GM12878 (cell line): ENCODE measurements at regions of chr7 and their contacts with region 1.

Region 1: GRCh38 chr7:8134089-8134733 is 127.8 kb downstream of the ICA1 start:
- DNase-seq: peak; percentile 99
- ATAC-seq: peak; percentile 73
- H3K4me3 ChIP-seq: no peak overlapping the region
- H3K27ac ChIP-seq: peak overlapping the region; percentile 94
- H3K4me1 ChIP-seq: peaks cover 54% of the 10 kb centered on the region
- H3K27me3 ChIP-seq: no peaks in the 10 kb centered on the region
- CTCF ChIP-seq: no peak
- EP300 ChIP-seq: peak; percentile 81 to 92
- POLR2A ChIP-seq: no peak
- RAD21 ChIP-seq: peak; percentile 39; the same call in 1 of the 2 replicates

Region 2: DNA sequence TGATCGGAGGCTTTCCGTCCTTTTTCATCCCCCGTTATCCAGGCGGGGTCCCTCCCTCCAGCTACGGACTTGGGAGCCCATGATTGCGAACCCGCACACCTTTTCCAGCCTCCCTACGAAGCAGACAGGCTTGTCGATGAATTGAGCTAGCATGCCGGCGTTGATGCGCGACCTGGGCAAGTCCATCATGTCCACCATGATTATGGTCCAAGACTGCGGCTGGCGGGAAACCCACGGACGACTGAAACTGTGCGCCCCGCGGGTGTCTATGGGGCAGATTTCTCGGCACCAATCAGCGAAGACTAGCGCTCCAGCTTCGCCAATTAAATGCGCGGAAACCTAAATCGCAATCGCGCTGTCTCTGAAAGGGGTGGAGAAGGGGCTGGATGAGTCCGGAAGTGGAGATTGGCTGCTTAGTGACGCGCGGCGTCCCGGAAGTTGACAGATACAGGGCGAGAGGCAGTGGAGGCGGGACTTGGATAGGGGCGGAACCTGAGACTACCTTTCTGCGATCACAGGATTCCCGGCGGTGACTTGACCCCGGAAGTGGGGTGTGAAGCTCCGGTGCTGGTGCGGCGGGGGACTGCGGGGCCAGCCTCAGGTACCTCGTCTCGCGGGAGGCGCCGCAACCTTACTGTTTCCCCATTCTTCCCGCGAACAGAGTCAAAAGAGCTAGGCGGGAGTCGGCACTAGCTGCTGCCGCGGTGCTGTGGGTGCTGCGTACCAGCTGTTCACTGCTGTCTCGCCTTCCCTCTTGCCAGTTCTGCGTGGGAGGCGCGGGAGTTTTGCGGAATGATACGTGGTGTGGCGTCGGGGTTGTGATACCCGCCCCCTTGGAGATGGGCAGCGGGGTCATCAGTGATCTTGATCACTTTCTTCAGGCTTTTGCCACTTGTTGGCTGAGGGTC is 493.7 kb before region 1 on chr7 and contains the start of gene UMAD1:
- CTCF ChIA-PET with region 1: no interaction called
- POLR2A ChIA-PET with region 1: no interaction called
- RAD21 ChIA-PET with region 1: no interaction called
- SMC1A ChIA-PET with region 1: interaction called, 5 read pairs
- in situ Hi-C with region 1: no loop called
- intact Hi-C with region 1: loop called (anchors 5 kb)
- DNase-seq: peak; percentile 99
- ATAC-seq: peak; percentile 95
- H3K4me3 ChIP-seq: peak within 1 kb of the TSS; percentile 93
- H3K27ac ChIP-seq: peak within 1 kb of the TSS; percentile 79
- H3K4me1 ChIP-seq: no peaks in the 10 kb centered on the region
- H3K27me3 ChIP-seq: no peaks in the 10 kb centered on the region
- CTCF ChIP-seq: no peak
- EP300 ChIP-seq: 0 out of 4 replicates have a peak, but pooled peaks of 1 of the 2 experiments have one; percentile 15
- POLR2A ChIP-seq: peak; percentile 95
- RAD21 ChIP-seq: no peak
- polyA plus RNA-seq, gene UMAD1: 8.7 to 8.8 TPM

Region 3: DNA sequence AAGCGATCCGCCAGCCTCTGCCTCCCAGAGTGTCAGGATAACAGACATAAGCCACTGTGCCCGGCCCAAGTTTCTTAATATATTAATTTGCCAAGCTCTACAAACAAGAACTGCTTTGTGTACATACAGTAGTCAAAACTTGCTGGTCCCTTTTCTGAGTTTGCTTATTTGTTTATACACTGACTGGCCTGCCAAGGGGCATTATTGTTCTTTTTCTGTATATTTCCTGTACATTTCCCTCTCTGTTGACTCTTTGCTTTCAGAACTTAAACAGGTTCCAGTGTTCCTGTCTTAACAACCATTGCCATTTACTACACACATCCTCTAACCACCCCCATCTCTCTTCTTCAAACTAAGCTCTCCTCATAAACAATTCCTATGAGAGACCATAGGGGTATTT is 354.3 kb before region 1 on chr7:
- CTCF ChIA-PET with region 1: no interaction called
- POLR2A ChIA-PET with region 1: no interaction called
- RAD21 ChIA-PET with region 1: no interaction called
- SMC1A ChIA-PET with region 1: no interaction called
- in situ Hi-C with region 1: no loop called
- intact Hi-C with region 1: no loop called
- DNase-seq: no peak
- ATAC-seq: peak; percentile 30; the same call in 2 of the 3 replicates
- H3K4me3 ChIP-seq: no peak overlapping the region
- H3K27ac ChIP-seq: no peak overlapping the region
- H3K4me1 ChIP-seq: no peaks in the 10 kb centered on the region
- H3K27me3 ChIP-seq: no peaks in the 10 kb centered on the region
- CTCF ChIP-seq: no peak
- EP300 ChIP-seq: no peak
- POLR2A ChIP-seq: no peak
- RAD21 ChIP-seq: no peak

Region 4: GRCh38 chr7:8115547-8116402 is 18.4 kb before region 1 on chr7:
- CTCF ChIA-PET with region 1: interaction called, 16 read pairs
- POLR2A ChIA-PET with region 1: interaction called, 133 read pairs
- RAD21 ChIA-PET with region 1: interaction called, 124 read pairs
- SMC1A ChIA-PET with region 1: interaction called, 182 read pairs
- in situ Hi-C with region 1: no loop called
- intact Hi-C with region 1: loop called (anchors 1 kb)
- DNase-seq: peak; percentile 98
- ATAC-seq: peak; percentile 85
- H3K4me3 ChIP-seq: no peak overlapping the region
- H3K27ac ChIP-seq: peak overlapping the region; percentile 56
- H3K4me1 ChIP-seq: peaks cover 43% of the 10 kb centered on the region
- H3K27me3 ChIP-seq: no peaks in the 10 kb centered on the region
- CTCF ChIP-seq: no peak
- EP300 ChIP-seq: peak; percentile 77 to 93; a peak in 2 of 4 replicates
- POLR2A ChIP-seq: no peak
- RAD21 ChIP-seq: peak; percentile 30; the same call in 1 of the 2 replicates

Region 5: GRCh38 chr7:8169171-8169570 is 35.0 kb after region 1 on chr7:
- CTCF ChIA-PET with region 1: interaction called, 5 read pairs
- POLR2A ChIA-PET with region 1: interaction called, 8 read pairs
- RAD21 ChIA-PET with region 1: no interaction called
- SMC1A ChIA-PET with region 1: interaction called, 14 read pairs
- in situ Hi-C with region 1: no loop called
- intact Hi-C with region 1: no loop called
- DNase-seq: no peak
- ATAC-seq: no peak
- H3K4me3 ChIP-seq: no peak overlapping the region
- H3K27ac ChIP-seq: no peak overlapping the region
- H3K4me1 ChIP-seq: no peaks in the 10 kb centered on the region
- H3K27me3 ChIP-seq: no peaks in the 10 kb centered on the region
- CTCF ChIP-seq: no peak
- EP300 ChIP-seq: no peak
- POLR2A ChIP-seq: no peak
- RAD21 ChIP-seq: no peak